SK-N-SH (cell line): ENCODE measurements at regions of chr16 and their contacts with region 1.

Region 1: DNA sequence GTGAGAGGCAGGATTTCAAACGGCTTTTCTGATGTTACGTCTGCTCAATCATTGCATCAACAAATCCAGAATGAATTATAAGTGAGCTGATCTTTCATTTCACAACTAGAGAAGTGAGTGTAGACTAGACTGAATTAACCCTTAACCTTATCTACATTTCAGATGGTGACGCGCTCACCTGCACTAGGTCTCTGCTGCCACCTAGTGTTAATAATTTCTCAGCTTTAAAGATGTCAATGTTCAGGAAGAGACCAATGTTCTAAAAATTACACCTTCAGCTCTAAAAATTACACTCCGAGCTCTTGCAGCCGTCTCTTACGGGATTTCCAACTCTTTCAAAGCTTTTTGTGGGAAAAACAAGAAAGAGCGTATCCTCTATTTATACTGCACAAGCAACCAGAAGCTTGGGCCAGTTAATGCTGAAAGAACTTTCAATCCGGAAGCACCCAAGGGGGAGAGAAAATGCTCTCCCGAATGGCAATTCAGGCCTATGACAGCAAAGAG is 88.2 kb upstream of the FA2H start:
- DNase-seq: peak; percentile 71
- H3K4me3 ChIP-seq: no peak overlapping the region
- H3K27ac ChIP-seq: no peak overlapping the region
- H3K4me1 ChIP-seq: no peaks in the 10 kb centered on the region
- H3K27me3 ChIP-seq: no peaks in the 10 kb centered on the region
- CTCF ChIP-seq: peak; percentile 95
- EP300 ChIP-seq: no peak
- RAD21 ChIP-seq: peak; percentile 93

Region 2: GRCh38 chr16:74695450-74696422 is 167.1 kb before region 1 on chr16:
- CTCF ChIA-PET with region 1: interaction called, 38 read pairs
- POLR2A ChIA-PET with region 1: no interaction called
- DNase-seq: peak; percentile 94
- H3K4me3 ChIP-seq: peak overlapping the region; percentile 50 to 55
- H3K27ac ChIP-seq: peak overlapping the region in 1 of 2 experiments; percentile 39; a peak in 1 of 4 replicates
- H3K4me1 ChIP-seq: no peaks in the 10 kb centered on the region; a peak in 1 of 4 replicates
- H3K27me3 ChIP-seq: no peaks in the 10 kb centered on the region
- CTCF ChIP-seq: no peak
- EP300 ChIP-seq: no peak
- RAD21 ChIP-seq: no peak

Region 3: GRCh38 chr16:74726716-74727115 is 136.1 kb before region 1 on chr16:
- CTCF ChIA-PET with region 1: interaction called, 22 read pairs
- POLR2A ChIA-PET with region 1: no interaction called
- DNase-seq: no peak
- H3K4me3 ChIP-seq: no peak overlapping the region
- H3K27ac ChIP-seq: no peak overlapping the region
- H3K4me1 ChIP-seq: peaks cover 0 to 9% of the 10 kb centered on the region in 2 experiments; a peak in 1 of 4 replicates
- H3K27me3 ChIP-seq: no peaks in the 10 kb centered on the region
- CTCF ChIP-seq: peak; percentile 53
- EP300 ChIP-seq: no peak
- RAD21 ChIP-seq: no peak

Region 4: DNA sequence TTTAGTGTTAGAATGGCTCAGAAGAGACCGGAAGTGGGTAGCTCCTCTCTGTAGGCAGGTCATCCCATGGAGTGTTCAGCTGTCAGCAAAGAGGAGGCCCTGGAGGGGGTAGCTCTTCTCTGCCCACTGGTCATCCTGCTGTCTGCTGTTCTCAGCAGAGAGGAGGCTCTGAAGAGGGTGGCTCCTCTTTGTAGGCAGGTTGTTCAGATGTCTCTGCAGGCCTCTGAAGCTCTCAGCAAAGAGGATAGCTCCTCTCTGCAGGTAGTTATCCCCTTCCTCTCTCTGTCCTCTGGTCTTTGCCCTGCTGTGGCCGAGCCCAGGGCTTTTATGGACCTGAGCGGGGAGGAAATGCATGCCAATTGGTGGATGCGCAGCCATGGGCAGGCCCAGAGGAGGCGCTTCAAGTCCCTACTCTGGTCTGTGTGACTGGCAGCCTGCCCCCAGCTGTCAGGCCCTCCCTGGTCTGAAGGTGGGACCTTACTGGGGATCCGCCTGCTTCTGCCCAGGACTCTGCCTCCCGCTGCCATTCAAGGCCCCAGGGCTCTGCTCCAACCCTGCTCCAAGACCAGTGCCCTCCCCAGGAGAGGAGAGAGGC is 55.6 kb before region 1 on chr16:
- CTCF ChIA-PET with region 1: interaction called, 148 read pairs
- POLR2A ChIA-PET with region 1: no interaction called
- DNase-seq: no peak
- H3K4me3 ChIP-seq: no peak overlapping the region
- H3K27ac ChIP-seq: no peak overlapping the region
- H3K4me1 ChIP-seq: no peaks in the 10 kb centered on the region
- H3K27me3 ChIP-seq: no peaks in the 10 kb centered on the region
- CTCF ChIP-seq: no peak
- EP300 ChIP-seq: no peak
- RAD21 ChIP-seq: no peak

Region 5: DNA sequence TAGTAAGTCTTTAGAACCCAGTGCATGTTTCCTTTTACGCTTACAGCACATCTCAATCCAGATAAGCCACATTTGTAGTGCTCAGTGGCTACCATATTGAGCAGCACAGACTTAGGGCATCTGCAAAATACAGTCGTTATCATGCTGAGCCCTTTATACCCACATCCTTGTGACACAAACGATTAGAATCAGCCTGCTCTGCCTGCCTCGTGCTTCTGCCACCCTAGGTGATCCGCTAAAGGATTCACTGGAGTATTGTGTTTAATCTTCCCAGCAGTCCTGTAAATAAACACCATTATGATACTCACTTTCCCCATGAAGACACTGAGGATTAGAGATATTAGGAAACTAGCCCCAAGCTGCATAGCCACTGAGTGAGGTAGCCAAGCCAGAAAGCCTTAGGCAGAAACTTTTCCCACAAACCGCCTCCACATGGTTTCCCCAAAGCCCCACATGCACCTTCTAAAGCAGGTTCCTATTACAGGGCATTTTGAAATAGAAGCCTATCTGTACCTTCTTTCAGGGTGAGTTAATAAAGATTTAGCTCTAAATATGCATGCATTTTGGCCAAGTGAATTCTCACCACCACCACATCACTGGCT is 36.8 kb before region 1 on chr16:
- CTCF ChIA-PET with region 1: interaction called, 20 read pairs
- POLR2A ChIA-PET with region 1: no interaction called
- DNase-seq: no peak
- H3K4me3 ChIP-seq: no peak overlapping the region
- H3K27ac ChIP-seq: no peak overlapping the region
- H3K4me1 ChIP-seq: no peaks in the 10 kb centered on the region; a peak in 1 of 4 replicates
- H3K27me3 ChIP-seq: peaks cover 5% of the 10 kb centered on the region; the same call in 1 of the 2 replicates
- CTCF ChIP-seq: no peak
- EP300 ChIP-seq: no peak
- RAD21 ChIP-seq: no peak

Region 6: GRCh38 chr16:74874912-74875546 is 12.2 kb after region 1 on chr16:
- CTCF ChIA-PET with region 1: interaction called, 74 read pairs
- POLR2A ChIA-PET with region 1: no interaction called
- DNase-seq: no peak
- H3K4me3 ChIP-seq: no peak overlapping the region
- H3K27ac ChIP-seq: no peak overlapping the region
- H3K4me1 ChIP-seq: peaks cover 0 to 3% of the 10 kb centered on the region in 2 experiments; a peak in 1 of 4 replicates
- H3K27me3 ChIP-seq: no peaks in the 10 kb centered on the region
- CTCF ChIP-seq: no peak
- EP300 ChIP-seq: no peak
- RAD21 ChIP-seq: no peak

Region 7: GRCh38 chr16:74903120-74903519 is 40.3 kb after region 1 on chr16:
- CTCF ChIA-PET with region 1: interaction called, 11 read pairs
- POLR2A ChIA-PET with region 1: no interaction called
- DNase-seq: no peak
- H3K4me3 ChIP-seq: no peak overlapping the region
- H3K27ac ChIP-seq: no peak overlapping the region
- H3K4me1 ChIP-seq: no peaks in the 10 kb centered on the region
- H3K27me3 ChIP-seq: no peaks in the 10 kb centered on the region
- CTCF ChIP-seq: no peak
- EP300 ChIP-seq: no peak
- RAD21 ChIP-seq: no peak

Region 8: DNA sequence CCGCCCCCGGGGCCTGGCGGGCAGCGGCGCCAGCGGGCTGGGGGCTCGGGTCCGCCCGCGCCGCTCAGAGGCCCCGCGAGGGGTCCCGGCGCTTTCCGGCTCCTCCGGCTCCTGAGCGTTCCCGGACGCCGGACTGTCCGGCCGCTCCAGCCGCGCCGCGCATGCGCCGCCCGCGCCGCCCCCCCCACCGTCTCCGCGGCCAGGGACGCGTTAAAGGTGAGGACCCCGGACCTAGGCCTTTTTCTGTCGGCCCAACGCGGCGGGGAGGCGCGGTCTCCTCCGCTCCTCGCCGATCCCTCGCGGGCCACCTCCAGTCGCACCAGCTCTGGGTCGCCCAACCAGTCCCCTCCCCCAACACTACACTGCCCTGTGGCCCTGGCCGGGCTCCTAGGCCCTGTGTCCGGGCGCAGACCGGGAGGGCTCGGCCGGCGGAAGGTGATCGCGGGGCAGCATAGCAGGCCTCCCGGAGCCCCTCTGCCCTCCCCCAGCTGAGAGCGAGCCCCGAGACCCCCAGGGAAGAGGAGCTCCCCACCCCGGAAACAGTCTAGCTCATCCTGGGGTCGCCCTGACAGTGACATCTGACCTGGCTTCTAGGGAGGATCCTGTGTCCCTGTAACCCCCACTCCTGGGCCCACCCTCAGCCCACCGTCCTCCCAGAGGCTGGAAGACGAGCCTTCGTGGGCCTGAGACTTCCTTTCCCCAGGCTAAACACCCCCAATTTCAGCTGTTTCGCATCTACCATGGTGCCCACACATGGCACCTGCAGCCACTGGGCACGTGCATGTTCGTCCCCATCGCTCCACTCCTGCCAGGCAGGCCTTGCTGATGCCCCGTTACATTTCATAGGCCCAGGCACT is 403.3 kb after region 1 on chr16:
- CTCF ChIA-PET with region 1: no interaction called
- POLR2A ChIA-PET with region 1: no interaction called
- DNase-seq: peak; percentile 99
- H3K4me3 ChIP-seq: peak overlapping the region; percentile 92 to 95
- H3K27ac ChIP-seq: peak overlapping the region; percentile 83 to 92; a peak in 3 of 4 replicates
- H3K4me1 ChIP-seq: peaks cover 28 to 59% of the 10 kb centered on the region in 2 experiments
- H3K27me3 ChIP-seq: no peaks in the 10 kb centered on the region
- CTCF ChIP-seq: no peak
- EP300 ChIP-seq: 0 out of 4 replicates have a peak, but pooled peaks of 1 of the 2 experiments have one; percentile 8
- RAD21 ChIP-seq: peak; percentile 34